Heart left ventricle (tissue), 16 donors: ENCODE measurements at regions of chr18 and their contacts with region 1.

Region 1: GRCh38 chr18:70004696-70005095 is 57.0 kb upstream of the CD226 start:
- DNase-seq: no peak
- ATAC-seq: peak; percentile 66 to 82 (median 76)
- H3K4me3 ChIP-seq: peak overlapping the region in 1 of 12 donors; percentile 6
- H3K27ac ChIP-seq: peak overlapping the region in 11 of 12 donors; percentile 10 to 84 (median 75)
- H3K4me1 ChIP-seq: peaks cover 0 to 41% (median 14%) of the 10 kb centered on the region in 12 donors
- H3K27me3 ChIP-seq: no peaks in the 10 kb centered on the region
- CTCF ChIP-seq: no peak
- POLR2A ChIP-seq: no peak

Region 2: GRCh38 chr18:69968039-69968438 is 36.7 kb before region 1 on chr18:
- intact Hi-C with region 1: no loop called
- DNase-seq: no peak
- ATAC-seq: no peak
- H3K4me3 ChIP-seq: no peak overlapping the region
- H3K27ac ChIP-seq: no peak overlapping the region
- H3K4me1 ChIP-seq: no peaks in the 10 kb centered on the region
- H3K27me3 ChIP-seq: no peaks in the 10 kb centered on the region
- CTCF ChIP-seq: no peak
- POLR2A ChIP-seq: no peak

Region 3: GRCh38 chr18:70029163-70029562 is 24.5 kb after region 1 on chr18:
- intact Hi-C with region 1: no loop called
- DNase-seq: no peak
- ATAC-seq: no peak
- H3K4me3 ChIP-seq: no peak overlapping the region
- H3K27ac ChIP-seq: no peak overlapping the region
- H3K4me1 ChIP-seq: no peaks in the 10 kb centered on the region
- H3K27me3 ChIP-seq: no peaks in the 10 kb centered on the region
- CTCF ChIP-seq: no peak
- POLR2A ChIP-seq: no peak

Region 4: GRCh38 chr18:70044632-70045031 is 39.9 kb after region 1 on chr18:
- intact Hi-C with region 1: loop called in 1 of 10 experiments (anchors 5 kb)
- DNase-seq: no peak
- ATAC-seq: peak in 1 of 4 donors; percentile 74
- H3K4me3 ChIP-seq: no peak overlapping the region
- H3K27ac ChIP-seq: peak overlapping the region in 1 of 12 donors; percentile 10
- H3K4me1 ChIP-seq: peaks cover 0 to 19% (median 3%) of the 10 kb centered on the region in 12 donors
- H3K27me3 ChIP-seq: no peaks in the 10 kb centered on the region
- CTCF ChIP-seq: no peak
- POLR2A ChIP-seq: no peak

Region 5: GRCh38 chr18:70058916-70059315 is 54.2 kb after region 1 on chr18:
- intact Hi-C with region 1: loop called in 1 of 10 experiments (anchors 10 kb)
- DNase-seq: no peak
- ATAC-seq: no peak
- H3K4me3 ChIP-seq: no peak overlapping the region
- H3K27ac ChIP-seq: no peak overlapping the region
- H3K4me1 ChIP-seq: peaks cover 0 to 3% (median 0%) of the 10 kb centered on the region in 12 donors
- H3K27me3 ChIP-seq: no peaks in the 10 kb centered on the region
- CTCF ChIP-seq: no peak
- POLR2A ChIP-seq: no peak

Region 6: DNA sequence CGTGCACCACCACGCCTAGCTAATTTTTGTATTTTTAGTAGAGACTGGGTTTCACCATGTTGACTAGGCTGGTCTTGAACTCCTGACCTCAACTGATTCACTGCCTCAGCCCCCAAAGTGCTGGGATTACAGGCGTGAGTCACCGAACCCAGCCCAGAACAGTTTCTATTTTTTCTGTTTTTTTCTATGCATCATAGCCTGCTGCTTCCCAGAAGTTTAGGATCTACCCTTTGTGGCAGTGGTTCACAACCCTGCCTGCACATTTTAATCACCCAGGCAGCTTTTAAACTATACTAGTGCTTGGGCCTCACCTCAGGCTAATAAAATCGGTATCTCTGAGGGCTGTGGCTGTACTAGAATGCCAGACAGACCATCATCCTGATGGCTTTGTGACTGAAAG is 244.4 kb after region 1 on chr18:
- intact Hi-C with region 1: no loop called
- DNase-seq: no peak
- ATAC-seq: no peak
- H3K4me3 ChIP-seq: no peak overlapping the region
- H3K27ac ChIP-seq: no peak overlapping the region
- H3K4me1 ChIP-seq: peaks cover 0 to 12% (median 6%) of the 10 kb centered on the region in 12 donors
- H3K27me3 ChIP-seq: no peaks in the 10 kb centered on the region
- CTCF ChIP-seq: no peak
- POLR2A ChIP-seq: no peak

Region 7: DNA sequence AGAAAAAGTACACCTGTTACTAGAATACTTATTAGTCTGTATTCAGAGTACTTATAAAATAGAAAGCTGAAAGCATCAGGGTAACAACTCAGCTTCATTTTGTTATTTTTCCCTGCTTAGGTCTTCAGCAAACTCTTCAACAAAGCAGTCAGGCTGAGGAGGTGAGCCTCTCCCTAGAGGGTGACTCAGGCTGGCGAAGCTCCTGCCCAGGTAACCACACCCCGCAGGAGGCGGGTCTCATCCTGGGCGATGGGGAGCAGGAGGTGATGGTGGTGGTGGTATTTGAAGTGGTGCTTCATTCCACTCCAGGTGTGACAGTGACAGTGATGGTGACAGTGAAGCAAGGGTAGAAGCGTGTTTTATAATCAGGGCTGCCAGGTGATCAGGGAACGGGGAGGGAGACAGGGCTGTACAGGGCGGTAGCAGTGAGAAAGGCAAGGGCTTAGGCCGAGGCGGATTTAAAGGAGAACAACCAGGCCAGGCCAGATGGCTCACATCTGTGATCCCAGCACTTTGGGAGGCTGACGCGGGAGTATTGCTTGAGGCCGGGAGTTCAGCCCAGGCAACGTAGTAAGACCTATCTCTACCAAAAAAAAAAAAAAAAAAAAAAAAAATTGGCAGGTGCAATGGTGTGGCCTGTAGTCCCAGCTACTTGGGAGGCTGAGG is 411.3 kb after region 1 on chr18:
- intact Hi-C with region 1: no loop called
- DNase-seq: no peak
- ATAC-seq: no peak
- H3K4me3 ChIP-seq: no peak overlapping the region
- H3K27ac ChIP-seq: no peak overlapping the region
- H3K4me1 ChIP-seq: peaks cover 0 to 26% (median 10%) of the 10 kb centered on the region in 12 donors
- H3K27me3 ChIP-seq: no peaks in the 10 kb centered on the region
- CTCF ChIP-seq: no peak
- POLR2A ChIP-seq: no peak